ENCODE measurements at regions of chr2 and their contacts with region 1.

Region 1: GRCh38 chr2:207746131-207746530 is 23.6 kb downstream of the FZD5 start:
- DNase-seq: peak; percentile 73 to 80
- H3K4me3 ChIP-seq: no peak overlapping the region
- H3K4me1 ChIP-seq: peaks cover 16% of the 10 kb centered on the region
- H3K27me3 ChIP-seq: no peaks in the 10 kb centered on the region

Region 2: GRCh38 chr2:207974216-207974605 is 228.1 kb after region 1 on chr2:
- in situ Hi-C with region 1: loop called (anchors 10 kb)
- DNase-seq: no peak
- H3K4me3 ChIP-seq: no peak overlapping the region
- H3K4me1 ChIP-seq: peaks cover 25% of the 10 kb centered on the region
- H3K27me3 ChIP-seq: no peaks in the 10 kb centered on the region

Region 3: DNA sequence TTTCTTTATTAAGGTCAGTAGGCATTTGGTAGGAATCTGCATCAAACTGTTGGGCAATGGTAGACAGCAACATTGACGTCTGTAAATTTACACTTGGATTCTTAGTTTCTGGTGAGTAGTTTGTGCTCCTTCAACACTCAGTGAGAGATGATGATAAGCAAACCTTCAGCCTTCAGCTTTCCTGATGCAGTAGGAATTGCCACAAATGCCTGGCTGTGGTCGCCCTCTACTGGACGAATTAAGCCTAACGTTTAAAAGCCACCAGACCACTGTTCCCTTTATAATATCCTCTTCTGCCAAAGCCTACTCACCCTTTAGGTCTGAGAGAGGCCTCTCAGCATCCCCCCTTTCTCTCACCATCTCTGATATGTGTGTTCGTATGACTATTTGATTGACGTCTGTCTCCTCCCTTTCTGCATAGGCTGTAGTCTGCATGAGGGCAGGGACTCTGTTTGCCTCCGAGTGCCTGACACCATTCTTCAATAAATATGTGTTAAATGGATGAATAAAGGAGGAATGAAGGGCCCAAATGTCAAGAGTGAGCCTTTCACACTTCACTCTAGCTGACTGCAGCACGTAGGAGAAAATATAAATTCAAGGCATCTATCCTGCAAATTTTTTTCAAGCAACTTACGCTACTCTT is 326.2 kb after region 1 on chr2:
- in situ Hi-C with region 1: loop called (anchors 5 kb)
- DNase-seq: peak; percentile 65 to 83
- H3K4me3 ChIP-seq: no peak overlapping the region
- H3K4me1 ChIP-seq: no peaks in the 10 kb centered on the region
- H3K27me3 ChIP-seq: no peaks in the 10 kb centered on the region; the same call in 1 of the 2 replicates

Measured in HAP-1 (cell line).